ENCODE measurements at regions of chr14 and their contacts with region 1.

Region 1: GRCh38 chr14:74612350-74613021 is 449 bp upstream of the LTBP2 start:
- DNase-seq: peak; percentile 84
- H3K4me3 ChIP-seq: peak overlapping the region; percentile 68 to 82
- H3K27ac ChIP-seq: peak overlapping the region in 1 of 2 donors; percentile 69
- H3K4me1 ChIP-seq: peaks cover 10% of the 10 kb centered on the region
- H3K27me3 ChIP-seq: no peaks in the 10 kb centered on the region
- CTCF ChIP-seq: peak; percentile 52 to 94 (median 68)
- POLR2A ChIP-seq: no peak

Region 2: GRCh38 chr14:74217672-74218448 is 394.6 kb before region 1 on chr14:
- intact Hi-C with region 1: no loop called
- DNase-seq: peak; percentile 76
- H3K4me3 ChIP-seq: peak overlapping the region in 1 of 2 donors; percentile 46
- H3K27ac ChIP-seq: no peak overlapping the region
- H3K4me1 ChIP-seq: peaks cover 4% of the 10 kb centered on the region
- H3K27me3 ChIP-seq: no peaks in the 10 kb centered on the region
- CTCF ChIP-seq: peak; percentile 43 to 92 (median 72)
- POLR2A ChIP-seq: no peak

Region 3: DNA sequence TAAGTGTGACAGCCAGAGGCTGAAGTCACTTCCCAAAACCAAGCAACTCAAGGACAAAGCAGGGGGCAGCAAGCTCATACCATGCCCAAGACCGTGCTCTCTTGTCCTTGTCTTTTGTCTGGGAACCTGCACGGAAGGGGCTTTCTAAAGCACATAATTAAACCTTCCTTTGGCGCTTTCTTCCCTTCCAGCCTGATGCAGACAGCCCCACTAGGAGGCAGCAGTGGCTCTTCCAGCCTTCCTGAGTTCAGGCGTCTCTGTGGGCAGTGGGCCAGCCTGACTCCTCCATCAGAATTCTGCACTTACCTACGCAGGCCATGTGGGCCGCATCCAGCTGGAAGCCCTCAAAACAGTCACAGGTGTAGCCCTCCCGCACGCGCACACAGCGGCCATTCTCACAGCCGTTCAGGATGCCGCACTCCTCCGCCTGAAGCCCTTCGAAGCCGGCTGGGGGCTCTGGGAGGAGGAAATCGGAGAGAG is 111.3 kb before region 1 on chr14:
- intact Hi-C with region 1: loop called (anchors 10 kb)
- DNase-seq: peak; percentile 88
- H3K4me3 ChIP-seq: no peak overlapping the region
- H3K27ac ChIP-seq: no peak overlapping the region
- H3K4me1 ChIP-seq: no peaks in the 10 kb centered on the region
- H3K27me3 ChIP-seq: no peaks in the 10 kb centered on the region
- CTCF ChIP-seq: peak in 2 of 3 experiments; percentile 50 to 65
- POLR2A ChIP-seq: no peak

Region 4: GRCh38 chr14:74804219-74804826 is 191.8 kb after region 1 on chr14:
- intact Hi-C with region 1: loop called (anchors 10 kb)
- DNase-seq: peak; percentile 38
- H3K4me3 ChIP-seq: no peak overlapping the region
- H3K27ac ChIP-seq: no peak overlapping the region
- H3K4me1 ChIP-seq: no peaks in the 10 kb centered on the region
- H3K27me3 ChIP-seq: no peaks in the 10 kb centered on the region
- CTCF ChIP-seq: peak in 2 of 3 experiments; percentile 22 to 61
- POLR2A ChIP-seq: no peak

Measured in testis (tissue), 5 donors.